ENCODE measurements at regions of chr2 and their contacts with region 1.

Region 1: DNA sequence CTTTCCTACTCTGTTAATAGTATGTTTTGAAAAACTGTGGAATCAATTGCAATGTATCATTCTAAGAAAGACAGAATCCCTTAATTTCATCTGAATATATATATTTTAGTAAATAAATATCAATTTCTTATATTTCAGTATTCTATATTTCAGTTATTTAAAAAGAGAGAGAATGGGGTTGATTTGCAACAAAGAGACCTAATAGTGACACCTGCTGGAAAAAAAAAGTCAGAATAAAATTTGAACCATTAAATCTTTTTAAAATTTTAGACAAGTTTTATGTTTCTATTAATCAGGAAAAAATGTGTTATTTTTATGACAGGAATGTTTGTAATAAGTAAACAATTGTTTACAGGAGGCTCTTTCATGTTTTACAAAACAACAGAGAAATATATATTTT is 20.7 kb upstream of the CCNT2 start:
- DNase-seq: no peak
- ATAC-seq: no peak
- H3K4me3 Mint-ChIP-seq: no peak overlapping the region
- H3K27ac Mint-ChIP-seq: no peak overlapping the region
- H3K4me1 Mint-ChIP-seq: no peaks in the 10 kb centered on the region
- H3K27me3 Mint-ChIP-seq: no peaks in the 10 kb centered on the region
- CTCF ChIP-seq: no peak

Region 2: GRCh38 chr2:134460583-134460998 is 437.3 kb before region 1 on chr2:
- CTCF ChIA-PET with region 1: interaction called, 13 read pairs
- POLR2A ChIA-PET with region 1: no interaction called
- intact Hi-C with region 1: loop called (anchors 1 kb)
- DNase-seq: no peak
- ATAC-seq: peak; percentile 88
- H3K4me3 Mint-ChIP-seq: no peak overlapping the region
- H3K27ac Mint-ChIP-seq: no peak overlapping the region
- H3K4me1 Mint-ChIP-seq: peaks cover 6% of the 10 kb centered on the region
- H3K27me3 Mint-ChIP-seq: no peaks in the 10 kb centered on the region
- CTCF ChIP-seq: no peak

Region 3: DNA sequence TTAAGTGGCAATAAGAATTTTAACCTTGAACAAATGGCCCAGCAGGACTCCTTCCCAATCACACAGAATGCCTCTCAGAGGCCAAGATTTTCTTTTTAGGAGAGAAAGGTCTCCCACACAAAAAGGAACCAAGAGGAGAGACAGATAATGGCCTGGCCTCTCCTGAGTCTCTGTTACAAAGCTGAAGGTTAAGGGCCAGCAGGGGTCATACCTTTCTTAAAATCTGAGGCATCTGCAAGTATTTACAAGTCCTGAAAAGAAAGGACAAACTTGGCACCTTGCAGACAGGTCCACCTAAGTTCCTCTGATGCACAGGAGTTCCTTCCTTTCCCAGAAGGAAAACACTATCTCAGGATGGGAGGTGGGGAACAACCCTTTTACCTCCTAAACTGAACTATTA is 321.5 kb before region 1 on chr2:
- CTCF ChIA-PET with region 1: interaction called, 4 read pairs
- POLR2A ChIA-PET with region 1: no interaction called
- intact Hi-C with region 1: loop called (anchors 2 kb)
- DNase-seq: no peak
- ATAC-seq: no peak
- H3K4me3 Mint-ChIP-seq: no peak overlapping the region
- H3K27ac Mint-ChIP-seq: no peak overlapping the region
- H3K4me1 Mint-ChIP-seq: peaks cover 7% of the 10 kb centered on the region
- H3K27me3 Mint-ChIP-seq: no peaks in the 10 kb centered on the region
- CTCF ChIP-seq: no peak

Region 4: DNA sequence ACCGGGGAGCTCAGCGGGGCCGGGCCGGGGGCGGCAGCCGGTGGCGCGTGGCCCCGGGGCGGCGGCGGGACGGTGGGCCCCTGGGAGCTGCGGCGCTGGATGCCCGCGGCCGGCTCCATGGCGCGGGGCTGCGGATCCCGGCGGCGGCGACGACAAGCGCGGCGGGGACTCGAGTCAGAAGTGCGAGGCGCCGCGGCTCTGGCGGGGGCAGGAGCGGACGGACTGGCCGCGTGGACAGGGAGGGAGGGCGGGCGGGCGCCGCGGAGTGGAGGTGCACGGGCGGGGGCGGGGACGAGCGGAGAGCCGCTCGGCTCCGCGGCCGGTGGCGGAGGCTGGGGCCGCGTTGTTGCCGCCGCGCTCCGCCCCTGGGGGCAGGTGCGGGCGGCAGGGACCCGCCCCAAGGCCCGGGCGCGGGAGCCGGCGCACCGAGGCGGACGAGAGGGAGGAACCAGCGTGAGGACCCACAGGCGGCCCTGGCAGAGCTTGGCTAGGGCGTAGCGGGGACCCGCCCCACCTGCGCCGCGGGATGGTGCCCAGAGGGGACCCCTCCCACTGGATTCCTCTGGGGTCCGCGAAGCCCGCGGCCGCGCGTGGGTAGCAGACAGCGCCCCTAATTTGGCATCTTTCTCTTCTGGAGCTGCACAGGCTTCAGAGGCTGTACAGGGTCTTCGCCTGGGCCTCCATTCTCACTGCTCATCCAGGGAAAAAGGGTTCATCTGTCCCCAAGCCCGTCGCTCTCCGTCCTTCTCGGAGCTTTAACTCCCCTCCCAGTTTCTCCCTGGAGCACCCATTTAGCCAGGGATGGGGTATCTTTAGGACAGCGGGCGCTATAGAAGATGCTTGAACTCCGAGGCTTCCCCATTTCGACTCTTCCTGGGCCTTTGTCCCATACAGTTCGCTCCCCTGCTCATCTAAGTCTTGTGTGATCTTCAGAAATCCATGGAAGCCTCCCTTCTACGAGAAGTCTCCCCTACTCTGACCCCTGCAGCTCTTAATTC is 178.8 kb before region 1 on chr2 and contains the start of gene TMEM163:
- CTCF ChIA-PET with region 1: no interaction called
- POLR2A ChIA-PET with region 1: no interaction called
- intact Hi-C with region 1: loop called (anchors 5 kb)
- DNase-seq: peak; percentile 56
- ATAC-seq: peak; percentile 84
- H3K4me3 Mint-ChIP-seq: peak within 1 kb of the TSS; percentile 85
- H3K27ac Mint-ChIP-seq: peak within 1 kb of the TSS; percentile 32
- H3K4me1 Mint-ChIP-seq: peaks cover 22% of the 10 kb centered on the region
- H3K27me3 Mint-ChIP-seq: peaks cover 21% of the 10 kb centered on the region
- CTCF ChIP-seq: no peak
- total RNA-seq, gene TMEM163: 4.4 and 6.0 TPM in 2 replicates